CD4-positive, alpha-beta T cell (primary cell): ENCODE measurements at regions of chr5 and their contacts with region 1.

Region 1: GRCh38 chr5:141992349-141992963 is 20.4 kb downstream of the GNPDA1 start:
- DNase-seq: peak; percentile 61 to 91 (median 78)
- ATAC-seq: peak; percentile 88
- H3K4me3 ChIP-seq: no peak overlapping the region
- H3K4me3 Mint-ChIP-seq: no peak overlapping the region
- H3K27ac ChIP-seq: no peak overlapping the region
- H3K27ac Mint-ChIP-seq: no peak overlapping the region
- H3K4me1 ChIP-seq: no peaks in the 10 kb centered on the region
- H3K4me1 Mint-ChIP-seq: peaks cover 6% of the 10 kb centered on the region
- H3K27me3 ChIP-seq: no peaks in the 10 kb centered on the region
- H3K27me3 Mint-ChIP-seq: no peaks in the 10 kb centered on the region
- CTCF ChIP-seq: peak; percentile 93

Region 2: DNA sequence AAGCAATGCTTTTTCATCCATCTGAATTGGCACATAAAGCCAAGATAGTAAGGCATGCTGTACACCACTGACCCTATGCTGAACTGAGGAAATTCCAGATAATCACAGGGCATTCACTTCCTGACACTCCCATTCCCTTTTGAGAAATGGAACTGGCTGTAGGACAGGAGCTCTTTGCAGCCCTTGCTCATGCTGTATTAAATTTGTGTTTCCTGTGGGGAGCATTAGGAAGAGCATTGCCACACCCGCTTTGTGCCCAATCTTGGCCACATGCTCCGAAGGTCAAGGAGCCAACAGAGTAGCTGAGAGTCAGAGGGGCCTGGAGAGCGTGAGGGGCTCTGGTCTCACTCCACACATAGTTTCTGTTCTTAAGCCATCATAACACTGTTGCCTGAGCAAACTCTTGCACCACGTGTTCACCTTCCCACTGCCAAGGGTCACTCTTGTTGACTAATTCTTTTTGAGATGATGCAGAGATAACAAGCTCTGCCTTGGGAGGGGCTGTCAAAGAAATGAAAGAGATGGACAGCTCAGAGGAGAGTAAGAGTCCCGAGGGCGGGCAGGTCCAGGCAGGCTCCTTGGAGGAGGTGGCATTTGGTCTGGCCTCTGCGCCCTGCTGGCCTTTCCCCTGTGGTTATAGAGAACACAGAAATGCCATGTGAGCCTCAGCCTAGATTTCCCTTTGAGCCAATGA is 278.7 kb before region 1 on chr5:
- CTCF ChIA-PET with region 1: no interaction called
- POLR2A ChIA-PET with region 1: no interaction called
- intact Hi-C with region 1: no loop called
- DNase-seq: no peak
- ATAC-seq: no peak
- H3K4me3 ChIP-seq: no peak overlapping the region
- H3K4me3 Mint-ChIP-seq: no peak overlapping the region
- H3K27ac ChIP-seq: no peak overlapping the region
- H3K27ac Mint-ChIP-seq: no peak overlapping the region
- H3K4me1 ChIP-seq: no peaks in the 10 kb centered on the region
- H3K4me1 Mint-ChIP-seq: no peaks in the 10 kb centered on the region
- H3K27me3 ChIP-seq: peaks cover 7 to 10% of the 10 kb centered on the region in 2 experiments
- H3K27me3 Mint-ChIP-seq: peaks cover 12% of the 10 kb centered on the region
- CTCF ChIP-seq: no peak

Region 3: DNA sequence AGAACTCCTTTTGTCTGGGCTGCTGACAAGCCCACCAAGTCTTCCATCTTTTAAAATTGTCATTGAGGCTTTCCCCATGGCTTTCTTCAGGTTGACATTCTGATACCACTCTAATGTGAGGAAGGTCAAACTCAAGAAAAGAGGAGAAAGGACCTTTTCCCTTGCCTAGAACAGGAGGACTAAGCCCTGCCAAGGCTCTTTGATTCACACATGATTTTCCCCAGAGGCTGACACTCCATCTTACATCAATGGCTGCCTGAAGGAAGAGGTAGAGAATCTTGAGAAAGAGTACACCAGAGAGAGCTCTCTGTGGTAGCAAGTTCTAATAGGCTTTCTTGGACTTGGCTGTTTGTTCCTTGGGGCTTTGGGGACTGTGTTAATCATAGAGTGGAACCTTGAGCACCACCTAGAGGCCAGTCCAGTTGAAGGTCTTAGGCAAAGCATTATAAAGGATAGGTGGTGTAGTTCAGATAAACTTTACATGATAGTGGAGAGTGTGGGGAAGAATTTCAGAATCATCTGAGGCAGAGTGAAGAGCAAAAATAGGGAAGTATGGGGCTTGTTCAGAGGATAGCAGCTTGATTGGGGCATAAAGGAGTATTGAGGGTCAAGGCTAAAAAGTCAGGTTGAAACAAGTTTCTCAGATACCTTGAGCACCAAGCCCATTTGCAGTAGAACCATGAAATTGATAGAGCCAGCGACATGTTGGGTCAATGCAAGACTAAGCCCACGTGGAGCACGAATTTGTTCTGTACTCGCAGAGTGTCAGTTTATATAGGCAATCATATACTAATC is 152.8 kb after region 1 on chr5:
- CTCF ChIA-PET with region 1: interaction called, 13 read pairs
- POLR2A ChIA-PET with region 1: interaction called, 3 read pairs
- intact Hi-C with region 1: loop called (anchors 1 kb)
- DNase-seq: peak; percentile 28 to 79 (median 52)
- ATAC-seq: peak; percentile 74
- H3K4me3 ChIP-seq: no peak overlapping the region
- H3K4me3 Mint-ChIP-seq: no peak overlapping the region
- H3K27ac ChIP-seq: no peak overlapping the region
- H3K27ac Mint-ChIP-seq: no peak overlapping the region
- H3K4me1 ChIP-seq: no peaks in the 10 kb centered on the region
- H3K4me1 Mint-ChIP-seq: peaks cover 5% of the 10 kb centered on the region
- H3K27me3 ChIP-seq: no peaks in the 10 kb centered on the region
- H3K27me3 Mint-ChIP-seq: no peaks in the 10 kb centered on the region
- CTCF ChIP-seq: peak; percentile 75

Region 4: DNA sequence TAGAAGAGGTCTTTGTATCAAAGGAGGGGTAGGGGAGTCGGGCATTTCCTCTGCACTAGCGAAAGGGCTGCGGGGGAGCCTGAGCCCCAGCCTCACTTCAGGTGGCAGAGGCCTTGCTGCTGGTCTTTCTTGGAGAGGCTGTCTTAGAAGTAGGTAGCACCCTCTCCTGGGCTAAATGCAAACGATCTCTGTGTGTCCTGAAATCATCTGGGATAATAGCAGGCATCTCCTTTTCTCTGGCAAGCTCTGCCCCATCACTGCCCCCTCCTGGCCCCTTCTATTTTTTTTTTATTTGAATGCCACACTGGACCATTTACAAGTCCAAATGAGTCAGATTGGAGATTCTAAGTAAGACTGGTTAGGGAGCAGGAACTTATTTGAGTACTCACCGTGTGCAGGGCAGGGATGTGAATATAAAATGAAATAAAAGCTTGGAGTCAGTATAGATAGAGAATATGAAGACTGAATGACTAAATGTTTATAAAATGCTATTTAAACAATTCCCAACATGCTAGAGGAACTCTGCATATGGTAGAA is 556.4 kb after region 1 on chr5:
- CTCF ChIA-PET with region 1: no interaction called
- POLR2A ChIA-PET with region 1: no interaction called
- intact Hi-C with region 1: loop called (anchors 5 kb)
- DNase-seq: peak in 4 of 14 experiments; percentile 28 to 57 (median 44)
- ATAC-seq: peak; percentile 49
- H3K4me3 ChIP-seq: no peak overlapping the region
- H3K4me3 Mint-ChIP-seq: no peak overlapping the region
- H3K27ac ChIP-seq: no peak overlapping the region
- H3K27ac Mint-ChIP-seq: no peak overlapping the region
- H3K4me1 ChIP-seq: peaks cover 11% of the 10 kb centered on the region
- H3K4me1 Mint-ChIP-seq: peaks cover 25% of the 10 kb centered on the region
- H3K27me3 ChIP-seq: peaks cover 21 to 25% of the 10 kb centered on the region in 2 experiments
- H3K27me3 Mint-ChIP-seq: peaks cover 31% of the 10 kb centered on the region
- CTCF ChIP-seq: peak; percentile 57

Region 5: GRCh38 chr5:142929587-142929986 is 937.1 kb after region 1 on chr5:
- CTCF ChIA-PET with region 1: no interaction called
- POLR2A ChIA-PET with region 1: no interaction called
- intact Hi-C with region 1: no loop called
- DNase-seq: peak in 4 of 14 experiments; percentile 5 to 70 (median 26)
- ATAC-seq: no peak
- H3K4me3 ChIP-seq: no peak overlapping the region
- H3K4me3 Mint-ChIP-seq: no peak overlapping the region
- H3K27ac ChIP-seq: no peak overlapping the region
- H3K27ac Mint-ChIP-seq: no peak overlapping the region
- H3K4me1 ChIP-seq: no peaks in the 10 kb centered on the region
- H3K4me1 Mint-ChIP-seq: peaks cover 20% of the 10 kb centered on the region
- H3K27me3 ChIP-seq: no peaks in the 10 kb centered on the region
- H3K27me3 Mint-ChIP-seq: no peaks in the 10 kb centered on the region
- CTCF ChIP-seq: no peak